ENCODE measurements at regions of chr6 and their contacts with region 1.

Region 1: DNA sequence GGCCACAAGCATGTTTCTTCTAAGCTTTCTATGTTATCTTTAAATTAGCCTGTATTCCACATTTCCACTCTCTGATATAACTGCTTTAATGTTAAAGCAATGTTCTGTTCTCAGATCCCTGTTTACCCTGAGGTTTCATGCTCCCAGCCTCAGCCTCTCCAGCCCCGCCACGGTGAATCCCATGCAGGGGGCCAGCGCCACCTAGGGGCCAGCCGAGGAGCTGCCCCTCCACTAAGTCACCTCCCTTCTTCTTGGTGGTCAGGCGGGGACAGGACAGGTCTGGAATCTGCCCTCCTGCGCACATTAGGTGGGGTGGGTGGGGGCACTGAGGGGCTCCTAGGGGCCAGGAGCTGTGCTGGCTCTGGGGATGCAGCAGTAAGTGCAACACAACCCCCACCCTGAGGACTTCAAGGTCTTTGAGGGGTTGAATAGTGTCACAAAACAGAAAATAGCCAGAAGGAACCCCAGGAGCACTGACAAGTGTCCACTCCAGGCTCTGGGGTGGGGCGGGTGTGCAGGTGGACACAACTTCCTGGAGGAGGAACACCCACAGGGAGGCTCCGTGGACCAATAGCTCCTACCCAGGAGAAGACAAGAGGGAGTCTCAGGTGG is 61.6 kb downstream of the RAB44 start:
- DNase-seq: peak; percentile 58 to 88 (median 76)
- ATAC-seq: peak; percentile 53
- H3K4me3 ChIP-seq: no peak overlapping the region
- H3K4me3 Mint-ChIP-seq: no peak overlapping the region
- H3K27ac ChIP-seq: no peak overlapping the region
- H3K27ac Mint-ChIP-seq: no peak overlapping the region
- H3K4me1 ChIP-seq: peaks cover 49% of the 10 kb centered on the region
- H3K4me1 Mint-ChIP-seq: peaks cover 46% of the 10 kb centered on the region
- H3K27me3 ChIP-seq: no peaks in the 10 kb centered on the region
- H3K27me3 Mint-ChIP-seq: no peaks in the 10 kb centered on the region
- CTCF ChIP-seq: peak; percentile 98

Region 2: DNA sequence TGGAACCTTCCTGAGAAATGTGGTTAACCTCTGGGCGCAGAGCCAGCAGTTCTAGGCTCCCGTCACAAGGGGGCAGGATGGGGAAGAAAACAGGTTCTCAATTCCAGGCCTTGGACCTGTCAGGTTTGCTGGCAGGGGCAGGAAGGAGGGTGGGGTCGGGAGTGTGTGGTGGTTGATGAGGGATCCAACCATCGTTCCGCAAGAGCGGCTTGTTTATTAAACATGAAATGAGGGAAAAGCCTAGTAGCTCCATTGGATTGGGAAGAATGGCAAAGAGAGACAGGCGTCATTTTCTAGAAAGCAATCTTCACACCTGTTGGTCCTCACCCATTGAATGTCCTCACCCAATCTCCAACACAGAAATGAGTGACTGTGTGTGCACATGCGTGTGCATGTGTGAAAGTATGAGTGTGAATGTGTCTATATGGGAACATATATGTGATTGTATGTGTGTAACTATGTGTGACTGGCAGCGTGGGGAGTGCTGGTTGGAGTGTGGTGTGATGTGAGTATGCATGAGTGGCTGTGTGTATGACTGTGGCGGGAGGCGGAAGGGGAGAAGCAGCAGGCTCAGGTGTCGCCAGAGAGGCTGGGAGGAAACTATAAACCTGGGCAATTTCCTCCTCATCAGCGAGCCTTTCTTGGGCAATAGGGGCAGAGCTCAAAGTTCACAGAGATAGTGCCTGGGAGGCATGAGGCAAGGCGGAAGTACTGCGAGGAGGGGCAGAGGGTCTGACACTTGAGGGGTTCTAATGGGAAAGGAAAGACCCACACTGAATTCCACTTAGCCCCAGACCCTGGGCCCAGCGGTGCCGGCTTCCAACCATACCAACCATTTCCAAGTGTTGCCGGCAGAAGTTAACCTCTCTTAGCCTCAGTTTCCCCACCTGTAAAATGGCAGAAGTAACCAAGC is 135.5 kb before region 1 on chr6:
- CTCF ChIA-PET with region 1: interaction called, 16 read pairs
- POLR2A ChIA-PET with region 1: interaction called, 3 read pairs
- intact Hi-C with region 1: loop called (anchors 1 kb)
- DNase-seq: peak; percentile 65 to 88 (median 74)
- ATAC-seq: peak; percentile 94
- H3K4me3 ChIP-seq: no peak overlapping the region
- H3K4me3 Mint-ChIP-seq: no peak overlapping the region
- H3K27ac ChIP-seq: no peak overlapping the region
- H3K27ac Mint-ChIP-seq: no peak overlapping the region
- H3K4me1 ChIP-seq: peaks cover 12% of the 10 kb centered on the region
- H3K4me1 Mint-ChIP-seq: peaks cover 6% of the 10 kb centered on the region
- H3K27me3 ChIP-seq: no peaks in the 10 kb centered on the region
- H3K27me3 Mint-ChIP-seq: no peaks in the 10 kb centered on the region
- CTCF ChIP-seq: peak; percentile 83

Region 3: DNA sequence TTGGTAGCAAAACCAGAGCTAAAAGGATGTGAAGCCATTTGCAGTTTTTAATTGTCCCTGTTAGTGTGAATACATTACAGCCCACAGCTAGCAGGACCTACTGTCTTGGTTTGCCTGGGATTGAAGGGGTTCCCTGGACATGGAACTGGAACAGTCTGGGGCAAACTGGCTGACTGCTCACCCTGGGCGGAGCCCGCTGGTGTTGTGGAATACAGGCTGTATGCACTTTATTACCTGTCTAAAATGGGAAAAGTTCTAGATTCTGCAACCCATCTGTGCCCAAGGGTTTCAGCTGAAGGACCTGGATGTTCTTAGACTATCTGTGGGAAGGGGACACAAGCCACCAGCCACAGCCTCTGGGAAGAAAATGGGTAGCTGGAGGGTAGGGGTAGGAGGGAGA is 93.0 kb before region 1 on chr6:
- CTCF ChIA-PET with region 1: no interaction called
- POLR2A ChIA-PET with region 1: no interaction called
- intact Hi-C with region 1: no loop called
- DNase-seq: no peak
- ATAC-seq: no peak
- H3K4me3 ChIP-seq: no peak overlapping the region
- H3K4me3 Mint-ChIP-seq: no peak overlapping the region
- H3K27ac ChIP-seq: no peak overlapping the region
- H3K27ac Mint-ChIP-seq: no peak overlapping the region
- H3K4me1 ChIP-seq: peaks cover 11% of the 10 kb centered on the region
- H3K4me1 Mint-ChIP-seq: peaks cover 3% of the 10 kb centered on the region
- H3K27me3 ChIP-seq: peaks cover 0 to 6% of the 10 kb centered on the region in 2 experiments
- H3K27me3 Mint-ChIP-seq: no peaks in the 10 kb centered on the region
- CTCF ChIP-seq: no peak

Measured in CD4-positive, alpha-beta T cell (primary cell).